WTC11 (cell line): ENCODE measurements at regions of chr1 and their contacts with region 1.

Region 1: DNA sequence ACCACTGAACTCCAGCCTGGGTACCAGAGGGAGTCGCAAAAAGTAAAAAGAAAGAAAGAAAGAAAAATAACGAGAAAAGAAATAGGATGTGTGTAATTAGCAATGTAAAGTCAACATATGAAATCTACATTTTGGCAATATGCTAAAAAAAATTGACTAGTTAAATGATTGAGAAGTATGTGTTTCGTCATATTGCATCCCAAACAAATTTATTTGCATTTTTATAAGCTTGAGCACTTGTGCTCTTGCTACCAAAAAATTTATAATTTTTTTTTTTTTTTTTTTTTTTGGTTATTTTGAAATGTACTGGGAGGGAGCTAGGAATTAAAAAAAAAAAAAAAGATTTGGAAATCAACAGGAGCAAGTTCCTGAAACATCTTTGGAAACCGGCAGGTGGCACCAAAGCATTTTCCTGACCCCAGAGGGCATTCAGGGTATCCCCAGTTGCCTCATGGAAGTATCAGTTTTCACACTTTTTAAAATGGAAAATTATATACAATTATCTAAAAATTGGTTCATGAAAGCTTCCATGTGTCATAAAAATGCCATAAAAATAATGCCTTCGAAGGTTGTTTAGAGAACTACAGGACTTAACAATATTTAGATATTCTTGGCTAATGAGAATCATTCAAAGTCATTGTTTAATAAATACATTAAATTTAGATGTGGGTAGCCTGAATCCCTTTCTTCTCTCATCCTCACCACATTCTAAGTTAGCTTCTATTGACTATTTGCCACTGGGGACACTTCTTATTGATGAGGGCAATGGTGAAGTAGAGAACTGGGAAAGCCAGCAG is 4.8 kb upstream of the HEATR1 start:
- DNase-seq: peak; percentile 79
- ATAC-seq: no peak
- H3K4me3 Mint-ChIP-seq: no peak overlapping the region
- H3K27ac Mint-ChIP-seq: no peak overlapping the region
- H3K4me1 Mint-ChIP-seq: peaks cover 10% of the 10 kb centered on the region
- H3K27me3 Mint-ChIP-seq: no peaks in the 10 kb centered on the region; the same call in 1 of the 2 replicates
- CTCF ChIP-seq: peak; percentile 40; the same call in 1 of the 2 replicates

Region 2: DNA sequence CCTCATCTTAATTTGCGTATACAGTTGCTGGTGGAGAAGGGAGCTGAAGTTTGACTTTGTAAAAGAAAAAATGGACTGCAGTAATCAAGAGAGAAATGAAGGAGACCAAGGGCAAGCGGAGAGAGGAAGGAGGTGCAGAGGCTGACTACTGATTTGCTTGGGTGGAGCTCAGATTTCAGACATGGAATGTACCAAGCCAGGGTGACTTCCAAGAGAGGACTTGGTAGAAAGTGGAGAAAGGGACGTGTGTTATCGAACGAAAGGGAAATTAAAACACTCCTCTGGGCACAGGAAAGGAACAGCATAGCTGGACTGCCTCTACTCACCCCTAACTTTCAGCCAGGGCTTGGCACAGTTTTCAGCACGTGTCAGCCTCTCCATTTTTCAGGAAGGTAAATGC is 10.3 kb after region 1 on chr1:
- CTCF ChIA-PET with region 1: interaction called, 11 read pairs
- POLR2A ChIA-PET with region 1: no interaction called
- DNase-seq: no peak
- ATAC-seq: peak; percentile 36
- H3K4me3 Mint-ChIP-seq: no peak overlapping the region
- H3K27ac Mint-ChIP-seq: no peak overlapping the region
- H3K4me1 Mint-ChIP-seq: peaks cover 14% of the 10 kb centered on the region
- H3K27me3 Mint-ChIP-seq: peaks cover 3% of the 10 kb centered on the region; the same call in 1 of the 2 replicates
- CTCF ChIP-seq: no peak

Region 3: DNA sequence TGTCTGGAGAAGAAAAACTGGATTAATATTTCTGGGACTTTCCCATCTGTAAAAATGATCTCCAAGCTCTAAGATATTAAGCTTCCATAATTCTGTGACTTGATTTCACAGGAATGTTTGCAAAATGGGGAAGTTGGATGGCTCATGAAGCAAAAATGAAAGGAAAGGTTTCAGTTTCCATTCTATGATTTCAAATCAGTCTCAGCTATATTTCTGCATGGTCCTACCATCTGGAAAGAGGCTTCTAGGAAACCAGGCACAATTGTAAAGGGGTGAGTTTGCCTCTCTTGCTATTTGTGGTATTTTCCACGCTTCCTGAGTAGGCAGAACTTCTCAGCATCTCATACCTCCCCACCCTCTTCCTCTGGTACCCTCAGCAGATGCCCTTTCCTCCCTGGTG is 54.8 kb after region 1 on chr1:
- CTCF ChIA-PET with region 1: no interaction called
- POLR2A ChIA-PET with region 1: no interaction called
- DNase-seq: no peak
- ATAC-seq: no peak
- H3K4me3 Mint-ChIP-seq: no peak overlapping the region
- H3K27ac Mint-ChIP-seq: no peak overlapping the region
- H3K4me1 Mint-ChIP-seq: peaks cover 9% of the 10 kb centered on the region
- H3K27me3 Mint-ChIP-seq: no peaks in the 10 kb centered on the region; the same call in 1 of the 2 replicates
- CTCF ChIP-seq: no peak

Region 4: GRCh38 chr1:236753516-236753915 is 144.4 kb after region 1 on chr1:
- CTCF ChIA-PET with region 1: interaction called, 24 read pairs
- POLR2A ChIA-PET with region 1: no interaction called
- DNase-seq: peak; percentile 30
- ATAC-seq: peak; percentile 99
- H3K4me3 Mint-ChIP-seq: no peak overlapping the region
- H3K27ac Mint-ChIP-seq: no peak overlapping the region
- H3K4me1 Mint-ChIP-seq: no peaks in the 10 kb centered on the region
- H3K27me3 Mint-ChIP-seq: no peaks in the 10 kb centered on the region
- CTCF ChIP-seq: no peak

Region 5: GRCh38 chr1:236768601-236769000 is 159.5 kb after region 1 on chr1:
- CTCF ChIA-PET with region 1: interaction called, 14 read pairs
- POLR2A ChIA-PET with region 1: no interaction called
- DNase-seq: no peak
- ATAC-seq: peak; percentile 48
- H3K4me3 Mint-ChIP-seq: no peak overlapping the region
- H3K27ac Mint-ChIP-seq: no peak overlapping the region
- H3K4me1 Mint-ChIP-seq: no peaks in the 10 kb centered on the region
- H3K27me3 Mint-ChIP-seq: no peaks in the 10 kb centered on the region
- CTCF ChIP-seq: no peak

Region 6: DNA sequence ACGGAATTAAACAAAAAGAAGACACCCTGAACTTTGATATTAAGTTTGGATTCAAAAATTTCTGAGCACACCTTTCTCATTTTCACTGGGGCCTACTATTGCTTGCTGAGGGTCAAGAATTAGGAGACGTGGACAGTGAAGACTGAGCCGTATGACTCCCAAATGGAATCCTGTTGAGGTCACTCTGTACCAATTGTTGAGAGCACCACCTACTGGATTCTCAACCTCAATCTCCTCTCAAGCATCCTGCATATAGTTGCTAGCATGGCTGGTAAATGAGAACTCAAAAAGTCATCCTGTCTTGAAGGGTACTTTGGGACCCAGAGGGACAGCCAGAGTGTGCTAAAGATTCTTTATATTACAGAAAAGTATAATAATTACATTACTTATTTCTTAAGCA is 165.8 kb after region 1 on chr1:
- CTCF ChIA-PET with region 1: interaction called, 14 read pairs
- POLR2A ChIA-PET with region 1: no interaction called
- DNase-seq: no peak
- ATAC-seq: peak; percentile 99
- H3K4me3 Mint-ChIP-seq: no peak overlapping the region
- H3K27ac Mint-ChIP-seq: no peak overlapping the region
- H3K4me1 Mint-ChIP-seq: no peaks in the 10 kb centered on the region
- H3K27me3 Mint-ChIP-seq: no peaks in the 10 kb centered on the region; the same call in none of the 2 replicates
- CTCF ChIP-seq: no peak

Region 7: GRCh38 chr1:236795035-236795756 is 186.1 kb after region 1 on chr1 and contains the start of gene MTR:
- CTCF ChIA-PET with region 1: interaction called, 11 read pairs
- POLR2A ChIA-PET with region 1: interaction called, 3 read pairs
- DNase-seq: peak; percentile 97
- ATAC-seq: peak; percentile 99
- H3K4me3 Mint-ChIP-seq: peak within 1 kb of the TSS; percentile 90
- H3K27ac Mint-ChIP-seq: peak within 1 kb of the TSS; percentile 87
- H3K4me1 Mint-ChIP-seq: peaks cover 19% of the 10 kb centered on the region
- H3K27me3 Mint-ChIP-seq: peaks cover 24% of the 10 kb centered on the region
- CTCF ChIP-seq: no peak
- total RNA-seq, gene MTR: 27.5 to 36.1 TPM (median 34.5 TPM) in 3 replicates